Activated B cell treated with CpG ODN at 0.5 μM for 24 hours (primary cell): ENCODE measurements at regions of chr14 and their contacts with region 1.

Region 1: DNA sequence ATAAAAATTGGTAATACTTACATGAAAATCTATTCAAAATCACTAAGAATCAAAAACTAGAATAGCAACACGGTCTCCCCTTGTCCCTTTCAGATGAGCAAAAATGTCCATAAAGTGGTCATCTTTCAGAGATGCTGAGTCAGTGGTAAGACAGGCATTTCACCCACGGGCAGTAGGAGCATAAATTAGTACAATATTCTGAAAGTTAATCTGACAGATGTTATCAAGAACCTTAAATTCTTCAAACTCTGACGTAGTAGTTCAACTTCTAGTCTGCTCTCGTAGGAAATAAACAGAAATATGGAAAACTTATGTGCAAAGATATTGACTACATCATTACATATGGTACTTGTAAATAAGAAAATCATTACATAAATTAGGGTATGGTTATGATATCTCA is 33.1 kb upstream of the GNPNAT1 start:
- DNase-seq: no peak
- ATAC-seq: no peak
- H3K4me3 Mint-ChIP-seq: no peak overlapping the region
- H3K27ac Mint-ChIP-seq: no peak overlapping the region
- H3K4me1 Mint-ChIP-seq: no peaks in the 10 kb centered on the region
- H3K27me3 Mint-ChIP-seq: peaks cover 2% of the 10 kb centered on the region
- CTCF ChIP-seq: no peak

Region 2: GRCh38 chr14:52355016-52355431 is 469.5 kb before region 1 on chr14:
- CTCF ChIA-PET with region 1: no interaction called
- POLR2A ChIA-PET with region 1: no interaction called
- intact Hi-C with region 1: no loop called
- DNase-seq: no peak
- ATAC-seq: no peak
- H3K4me3 Mint-ChIP-seq: no peak overlapping the region
- H3K27ac Mint-ChIP-seq: no peak overlapping the region
- H3K4me1 Mint-ChIP-seq: no peaks in the 10 kb centered on the region
- H3K27me3 Mint-ChIP-seq: peaks cover 26% of the 10 kb centered on the region
- CTCF ChIP-seq: no peak

Region 3: GRCh38 chr14:52873694-52874093 is 49.2 kb after region 1 on chr14:
- CTCF ChIA-PET with region 1: no interaction called
- POLR2A ChIA-PET with region 1: no interaction called
- intact Hi-C with region 1: no loop called
- DNase-seq: no peak
- ATAC-seq: no peak
- H3K4me3 Mint-ChIP-seq: no peak overlapping the region
- H3K27ac Mint-ChIP-seq: no peak overlapping the region
- H3K4me1 Mint-ChIP-seq: no peaks in the 10 kb centered on the region
- H3K27me3 Mint-ChIP-seq: peaks cover 9% of the 10 kb centered on the region
- CTCF ChIP-seq: no peak

Region 4: DNA sequence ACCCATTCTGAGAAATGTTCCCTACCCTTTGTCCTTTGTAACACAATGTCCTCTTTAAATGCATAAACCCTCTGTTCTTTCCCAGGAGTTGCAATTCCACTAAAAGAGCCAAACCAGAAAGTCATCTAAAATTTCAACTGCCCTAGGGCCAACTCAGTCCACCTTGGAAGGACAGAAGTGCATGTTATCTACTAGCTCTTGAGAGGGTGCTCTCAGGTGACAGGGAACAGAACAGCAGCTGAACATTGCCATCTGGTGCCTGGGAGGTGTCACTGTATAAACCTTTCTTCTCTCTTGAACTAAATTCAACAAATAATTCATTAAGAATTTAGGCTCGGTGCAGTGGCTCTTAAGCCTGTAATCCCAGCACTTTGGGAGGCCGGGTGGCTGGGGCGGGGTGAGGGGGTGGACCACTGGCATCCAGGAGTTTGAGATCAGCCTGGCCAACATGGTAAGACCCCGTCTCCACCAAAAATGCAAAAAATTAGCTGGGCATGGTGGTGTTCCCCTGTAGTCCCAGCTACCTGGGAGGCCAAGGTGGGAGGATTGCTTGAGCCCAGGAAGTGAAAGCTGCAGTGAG is 136.6 kb after region 1 on chr14:
- CTCF ChIA-PET with region 1: interaction called, 10 read pairs
- POLR2A ChIA-PET with region 1: interaction called, 7 read pairs
- intact Hi-C with region 1: loop called (anchors 1 kb)
- DNase-seq: no peak
- ATAC-seq: peak; percentile 42
- H3K4me3 Mint-ChIP-seq: no peak overlapping the region
- H3K27ac Mint-ChIP-seq: no peak overlapping the region
- H3K4me1 Mint-ChIP-seq: no peaks in the 10 kb centered on the region
- H3K27me3 Mint-ChIP-seq: no peaks in the 10 kb centered on the region
- CTCF ChIP-seq: no peak

Region 5: GRCh38 chr14:53306267-53306721 is 481.8 kb after region 1 on chr14:
- CTCF ChIA-PET with region 1: interaction called, 20 read pairs
- POLR2A ChIA-PET with region 1: no interaction called
- intact Hi-C with region 1: loop called (anchors 1 kb)
- DNase-seq: no peak
- ATAC-seq: peak; percentile 42
- H3K4me3 Mint-ChIP-seq: peak overlapping the region; percentile 30
- H3K27ac Mint-ChIP-seq: no peak overlapping the region
- H3K4me1 Mint-ChIP-seq: peaks cover 17% of the 10 kb centered on the region
- H3K27me3 Mint-ChIP-seq: peaks cover 11% of the 10 kb centered on the region
- CTCF ChIP-seq: peak; percentile 68

Region 6: GRCh38 chr14:54347997-54348611 is 1523.6 kb after region 1 on chr14:
- CTCF ChIA-PET with region 1: interaction called, 3 read pairs
- POLR2A ChIA-PET with region 1: no interaction called
- intact Hi-C with region 1: loop called (anchors 5 kb)
- DNase-seq: no peak
- ATAC-seq: peak; percentile 21
- H3K4me3 Mint-ChIP-seq: no peak overlapping the region
- H3K27ac Mint-ChIP-seq: no peak overlapping the region
- H3K4me1 Mint-ChIP-seq: peaks cover 5% of the 10 kb centered on the region
- H3K27me3 Mint-ChIP-seq: peaks cover 4% of the 10 kb centered on the region
- CTCF ChIP-seq: no peak